ENCODE measurements at regions of chr7 and their contacts with region 1.

Region 1: DNA sequence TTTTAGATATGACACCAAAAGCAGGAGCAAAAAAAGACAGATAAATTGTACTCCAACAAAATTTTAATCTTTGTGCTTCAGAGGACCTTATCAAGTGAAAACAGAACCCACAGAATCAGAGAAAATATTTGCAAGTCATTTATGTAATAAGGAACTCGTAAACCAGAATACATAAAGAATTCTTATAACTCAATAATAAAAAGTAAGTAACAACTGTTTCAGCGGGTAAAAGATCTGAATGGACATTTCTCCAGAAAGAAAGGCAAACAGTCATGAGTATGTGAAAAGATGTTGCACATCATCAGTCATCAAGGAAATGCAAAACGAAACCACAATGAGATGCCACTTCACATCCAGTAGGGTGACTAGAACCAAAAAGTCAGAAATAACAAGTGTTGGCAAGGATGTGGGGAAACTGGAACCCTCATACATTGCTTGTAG is 167.7 kb upstream of the KCTD7 start:
- DNase-seq: no peak
- ATAC-seq: no peak
- H3K4me3 ChIP-seq: no peak overlapping the region
- H3K4me3 Mint-ChIP-seq: no peak overlapping the region
- H3K27ac ChIP-seq: no peak overlapping the region
- H3K27ac Mint-ChIP-seq: no peak overlapping the region
- H3K4me1 ChIP-seq: no peaks in the 10 kb centered on the region
- H3K4me1 Mint-ChIP-seq: peaks cover 0 to 22% (median 10%) of the 10 kb centered on the region in 7 donors
- H3K27me3 ChIP-seq: no peaks in the 10 kb centered on the region
- H3K27me3 Mint-ChIP-seq: no peaks in the 10 kb centered on the region

Region 2: DNA sequence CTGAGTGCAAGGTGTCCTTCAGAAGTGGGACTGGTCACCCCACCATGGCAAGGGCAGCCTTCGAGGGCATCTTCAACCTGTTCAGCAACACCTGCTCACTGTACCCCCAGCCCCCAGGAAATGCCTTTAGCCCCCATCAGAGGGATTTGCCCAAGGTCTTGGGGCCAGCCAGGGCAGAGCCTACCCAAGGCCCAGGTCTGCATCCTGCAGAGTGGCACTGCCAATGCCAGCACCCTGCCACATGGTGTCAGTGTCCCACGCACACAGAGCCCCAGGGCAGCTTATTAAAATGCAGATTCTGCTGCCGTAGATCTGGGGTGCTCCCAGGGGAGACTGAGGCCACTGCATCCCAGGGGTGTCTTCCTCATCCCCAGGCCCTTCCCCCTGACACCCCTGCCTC is 61.6 kb after region 1 on chr7:
- CTCF ChIA-PET with region 1: no interaction called
- POLR2A ChIA-PET with region 1: no interaction called
- intact Hi-C with region 1: loop called in 1 of 2 experiments (anchors 10 kb)
- DNase-seq: no peak
- ATAC-seq: peak; percentile 47
- H3K4me3 ChIP-seq: no peak overlapping the region
- H3K4me3 Mint-ChIP-seq: no peak overlapping the region
- H3K27ac ChIP-seq: no peak overlapping the region
- H3K27ac Mint-ChIP-seq: no peak overlapping the region
- H3K4me1 ChIP-seq: no peaks in the 10 kb centered on the region
- H3K4me1 Mint-ChIP-seq: peaks cover 0 to 5% (median 0%) of the 10 kb centered on the region in 7 donors
- H3K27me3 ChIP-seq: no peaks in the 10 kb centered on the region
- H3K27me3 Mint-ChIP-seq: no peaks in the 10 kb centered on the region